ENCODE measurements at regions of chr1 and their contacts with region 1.

Region 1: GRCh38 chr1:118711356-118711755 is 276.8 kb downstream of the TBX15 start:
- DNase-seq: no peak
- ATAC-seq: no peak
- H3K4me3 ChIP-seq: no peak overlapping the region
- H3K27ac ChIP-seq: no peak overlapping the region
- H3K4me1 ChIP-seq: no peaks in the 10 kb centered on the region
- H3K27me3 ChIP-seq: no peaks in the 10 kb centered on the region
- CTCF ChIP-seq: no peak

Region 2: GRCh38 chr1:118223426-118223825 is 487.9 kb before region 1 on chr1:
- intact Hi-C with region 1: loop called in 1 of 2 experiments (anchors 5 kb)
- DNase-seq: peak in 1 of 2 donors; percentile 49
- ATAC-seq: peak; percentile 78 to 98 (median 95)
- H3K4me3 ChIP-seq: no peak overlapping the region
- H3K27ac ChIP-seq: no peak overlapping the region
- H3K4me1 ChIP-seq: peaks cover 3% of the 10 kb centered on the region
- H3K27me3 ChIP-seq: no peaks in the 10 kb centered on the region
- CTCF ChIP-seq: peak; percentile 65

Region 3: GRCh38 chr1:118788463-118788862 is 77.1 kb after region 1 on chr1:
- intact Hi-C with region 1: no loop called
- DNase-seq: no peak
- ATAC-seq: peak; percentile 54 to 84 (median 62)
- H3K4me3 ChIP-seq: no peak overlapping the region
- H3K27ac ChIP-seq: no peak overlapping the region
- H3K4me1 ChIP-seq: no peaks in the 10 kb centered on the region
- H3K27me3 ChIP-seq: no peaks in the 10 kb centered on the region
- CTCF ChIP-seq: no peak